ENCODE measurements at regions of chr10 and their contacts with region 1.

Region 1: GRCh38 chr10:27241652-27242472 is 1.3 kb upstream of the ACBD5 start:
- DNase-seq: peak; percentile 87
- ATAC-seq: peak; percentile 72
- H3K4me3 ChIP-seq: peak overlapping the region; percentile 78 to 83
- H3K27ac ChIP-seq: peak overlapping the region; percentile 93
- H3K4me1 ChIP-seq: peaks cover 3 to 37% of the 10 kb centered on the region in 2 experiments; a peak in 3 of 4 replicates
- H3K27me3 ChIP-seq: no peaks in the 10 kb centered on the region
- CTCF ChIP-seq: peak; percentile 10 to 39 (median 29); a peak in 3 of 6 replicates
- POLR2A ChIP-seq: peak; percentile 74
- RAD21 ChIP-seq: peak; percentile 26; the same call in 1 of the 2 replicates

Region 2: DNA sequence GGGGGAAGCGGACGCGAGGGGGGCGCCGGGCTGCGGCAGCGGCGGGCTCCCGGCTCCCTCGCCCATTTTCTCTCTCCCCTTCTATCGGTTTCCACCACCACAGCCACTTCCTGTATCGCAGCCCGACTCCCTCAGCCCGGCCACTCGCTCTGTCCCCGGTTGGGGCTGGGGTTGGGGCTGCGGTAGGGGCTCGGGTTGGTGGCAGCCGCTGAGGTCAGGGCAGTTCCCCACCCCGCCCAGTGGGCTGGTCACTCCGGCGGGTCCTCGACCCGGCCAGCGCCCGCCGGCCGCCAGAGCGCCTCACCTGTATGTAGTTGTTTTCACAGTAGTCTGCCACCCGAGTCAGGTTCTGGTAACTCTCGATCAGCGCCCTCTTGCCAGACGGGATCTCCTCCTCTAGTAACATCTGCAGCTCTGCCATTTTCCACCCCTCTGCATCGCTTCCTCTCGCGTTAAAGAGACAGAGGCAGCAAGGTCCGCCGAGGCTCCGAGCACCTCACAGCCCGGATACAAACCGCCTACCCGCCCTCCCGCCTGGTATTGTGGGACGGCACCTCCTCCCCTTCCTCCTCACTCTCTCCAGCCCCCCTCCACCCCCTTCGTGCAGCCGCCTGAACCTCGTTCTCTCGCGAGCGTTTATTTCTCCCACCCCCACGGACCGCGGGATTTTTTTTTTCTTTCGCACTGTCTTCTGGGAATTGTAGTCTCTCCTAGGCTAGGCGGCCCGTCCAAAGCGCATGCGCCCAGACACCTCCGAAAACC is 381.2 kb before region 1 on chr10 and contains the start of gene ABI1:
- CTCF ChIA-PET with region 1: no interaction called
- POLR2A ChIA-PET with region 1: no interaction called
- RAD21 ChIA-PET with region 1: no interaction called
- intact Hi-C with region 1: loop called (anchors 2 kb)
- DNase-seq: peak; percentile 97
- ATAC-seq: peak; percentile 93
- H3K4me3 ChIP-seq: peak within 1 kb of the TSS; percentile 83 to 95
- H3K27ac ChIP-seq: peak within 1 kb of the TSS; percentile 82
- H3K4me1 ChIP-seq: peaks cover 0 to 25% of the 10 kb centered on the region in 2 experiments; a peak in 2 of 4 replicates
- H3K27me3 ChIP-seq: no peaks in the 10 kb centered on the region
- CTCF ChIP-seq: no peak
- POLR2A ChIP-seq: peak; percentile 93
- RAD21 ChIP-seq: no peak
- total RNA-seq, gene ABI1: 34.8 TPM

Region 3: DNA sequence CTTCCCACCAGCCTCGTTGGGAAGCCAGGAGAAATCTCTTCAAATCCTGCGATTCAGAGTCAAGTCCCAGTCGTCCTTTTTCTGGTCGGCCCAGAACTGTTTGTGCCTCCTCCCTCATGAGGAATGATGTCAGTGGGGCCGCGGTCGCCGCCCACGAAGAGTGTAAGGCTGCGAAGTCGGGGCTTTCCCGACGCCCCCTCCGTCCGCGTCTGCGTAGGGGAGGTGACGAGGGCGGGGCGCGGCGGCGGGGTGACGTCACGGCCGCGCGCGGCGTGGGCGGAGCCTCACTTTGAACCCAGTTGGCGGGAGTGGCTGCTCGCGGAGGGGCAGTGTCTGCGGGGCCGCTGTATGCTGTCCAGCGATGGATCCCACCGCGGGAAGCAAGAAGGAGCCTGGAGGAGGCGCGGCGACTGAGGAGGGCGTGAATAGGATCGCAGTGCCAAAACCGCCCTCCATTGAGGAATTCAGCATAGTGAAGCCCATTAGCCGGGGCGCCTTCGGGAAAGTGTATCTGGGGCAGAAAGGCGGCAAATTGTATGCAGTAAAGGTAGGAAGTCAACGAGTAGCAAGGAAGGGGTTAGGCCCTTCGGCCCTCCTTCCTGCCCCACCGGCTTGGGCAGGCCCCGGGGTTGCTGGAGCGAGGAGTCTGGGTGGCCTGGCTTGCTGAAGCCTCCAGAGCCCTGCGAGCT is 86.7 kb before region 1 on chr10 and contains the start of gene MASTL:
- CTCF ChIA-PET with region 1: interaction called, 5 read pairs
- POLR2A ChIA-PET with region 1: interaction called, 7 read pairs
- RAD21 ChIA-PET with region 1: no interaction called
- intact Hi-C with region 1: loop called (anchors 2 kb)
- DNase-seq: peak; percentile 78
- ATAC-seq: peak; percentile 82
- H3K4me3 ChIP-seq: peak within 1 kb of the TSS; percentile 95 to 100
- H3K27ac ChIP-seq: peak within 1 kb of the TSS; percentile 94
- H3K4me1 ChIP-seq: peaks cover 10 to 21% of the 10 kb centered on the region in 2 experiments; a peak in 3 of 4 replicates
- H3K27me3 ChIP-seq: no peaks in the 10 kb centered on the region
- CTCF ChIP-seq: no peak
- POLR2A ChIP-seq: peak; percentile 54
- RAD21 ChIP-seq: no peak
- total RNA-seq, gene MASTL: 13.8 TPM

Region 4: GRCh38 chr10:27252267-27253000 is 10.6 kb after region 1 on chr10:
- CTCF ChIA-PET with region 1: interaction called, 3 read pairs
- POLR2A ChIA-PET with region 1: interaction called, 7 read pairs
- RAD21 ChIA-PET with region 1: no interaction called
- intact Hi-C with region 1: loop called (anchors 1 kb)
- DNase-seq: no peak
- ATAC-seq: peak; percentile 94
- H3K4me3 ChIP-seq: peak overlapping the region; percentile 48 to 60
- H3K27ac ChIP-seq: peak overlapping the region; percentile 69; the same call in 1 of the 2 replicates
- H3K4me1 ChIP-seq: peaks cover 0 to 4% of the 10 kb centered on the region in 2 experiments; a peak in 1 of 4 replicates
- H3K27me3 ChIP-seq: no peaks in the 10 kb centered on the region
- CTCF ChIP-seq: no peak; a peak in 2 of 6 replicates
- POLR2A ChIP-seq: no peak
- RAD21 ChIP-seq: no peak

Region 5: DNA sequence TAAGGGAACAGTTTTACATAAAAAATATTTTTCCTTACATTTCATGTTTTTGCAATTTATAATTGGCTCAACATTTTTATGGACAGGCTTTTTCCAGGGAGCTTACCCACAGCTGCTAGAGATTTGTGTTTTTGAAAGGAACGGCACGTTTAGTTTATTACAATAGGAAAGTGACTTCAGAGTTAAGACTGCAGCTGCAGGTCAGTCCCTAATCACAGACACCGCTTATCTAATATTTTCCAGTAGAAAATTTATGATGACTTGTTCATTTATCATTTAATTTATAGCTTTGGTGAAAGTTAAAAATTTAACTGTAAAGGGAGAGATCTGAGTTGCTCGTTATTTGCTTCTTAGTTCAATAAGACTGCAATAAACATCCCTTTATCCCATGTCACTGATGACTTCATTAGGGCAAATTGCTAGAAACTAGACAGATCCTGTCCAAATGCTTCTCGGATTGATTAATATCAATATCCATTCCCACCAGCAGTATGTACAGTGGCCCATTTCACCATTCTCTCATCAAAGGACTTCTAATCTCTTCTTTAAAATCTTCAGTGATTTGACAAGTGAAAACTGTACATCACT is 854.0 kb after region 1 on chr10:
- CTCF ChIA-PET with region 1: no interaction called
- POLR2A ChIA-PET with region 1: no interaction called
- RAD21 ChIA-PET with region 1: no interaction called
- intact Hi-C with region 1: loop called (anchors 5 kb)
- DNase-seq: no peak
- ATAC-seq: peak; percentile 56
- H3K4me3 ChIP-seq: peak overlapping the region in 1 of 2 experiments; percentile 17; a peak in 1 of 4 replicates
- H3K27ac ChIP-seq: peak overlapping the region; percentile 96
- H3K4me1 ChIP-seq: peaks cover 71 to 89% of the 10 kb centered on the region in 2 experiments
- H3K27me3 ChIP-seq: no peaks in the 10 kb centered on the region
- CTCF ChIP-seq: no peak
- POLR2A ChIP-seq: no peak
- RAD21 ChIP-seq: no peak